ENCODE measurements at regions of chr7 and their contacts with region 1.

Region 1: GRCh38 chr7:104878577-104878976 is 135.4 kb upstream of the KMT2E start:
- DNase-seq: no peak
- H3K4me3 Mint-ChIP-seq: no peak overlapping the region
- H3K27ac Mint-ChIP-seq: peak overlapping the region; percentile 59
- H3K4me1 Mint-ChIP-seq: peaks cover 20% of the 10 kb centered on the region
- H3K27me3 Mint-ChIP-seq: peaks cover 3% of the 10 kb centered on the region

Region 2: GRCh38 chr7:104895522-104896236 is 17.1 kb after region 1 on chr7:
- intact Hi-C with region 1: loop called (anchors 2 kb)
- DNase-seq: no peak
- H3K4me3 Mint-ChIP-seq: no peak overlapping the region
- H3K27ac Mint-ChIP-seq: no peak overlapping the region
- H3K4me1 Mint-ChIP-seq: peaks cover 22% of the 10 kb centered on the region
- H3K27me3 Mint-ChIP-seq: peaks cover 8% of the 10 kb centered on the region